MCF 10A (cell line): ENCODE measurements at regions of chr1 and their contacts with region 1.

Region 1: DNA sequence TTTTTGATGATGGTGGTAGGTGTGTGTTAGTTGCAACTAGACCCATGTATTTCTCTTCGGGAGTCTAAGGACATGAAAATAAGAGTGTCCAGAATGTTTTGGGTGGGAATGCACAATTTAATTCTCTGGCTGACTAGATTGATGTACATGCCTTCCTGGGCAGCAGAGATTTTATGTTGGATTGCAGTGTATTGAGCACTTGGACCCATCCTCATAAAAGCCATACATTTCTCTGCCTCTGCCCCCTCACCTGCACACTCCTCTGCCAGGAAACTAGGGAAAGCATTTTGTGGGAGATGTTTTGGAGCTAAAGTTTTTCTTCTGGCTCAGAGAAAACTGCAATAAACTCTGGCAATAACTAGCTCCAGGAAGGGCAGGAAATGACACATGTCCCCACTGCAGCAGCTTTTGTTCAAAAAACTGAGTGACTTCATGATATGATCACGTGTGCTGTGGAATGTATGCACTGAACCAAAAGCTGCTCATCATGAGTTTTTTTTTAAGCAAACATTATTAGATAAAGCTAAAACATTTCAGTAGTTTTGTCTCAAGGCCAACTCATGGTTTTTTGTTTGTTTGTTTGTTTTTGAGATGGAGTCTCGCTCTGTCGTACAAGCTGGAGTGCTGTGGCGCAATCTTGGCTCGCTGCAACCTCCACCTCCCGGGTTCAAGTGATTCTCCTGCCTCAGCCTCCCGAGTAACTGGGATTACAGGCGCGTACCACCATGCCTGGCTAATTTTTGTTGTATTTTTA is 17.6 kb downstream of the RIT1 start:
- DNase-seq: peak; percentile 83
- H3K4me3 Mint-ChIP-seq: peak overlapping the region; percentile 53
- H3K27ac Mint-ChIP-seq: peak overlapping the region; percentile 93
- H3K4me1 Mint-ChIP-seq: peaks cover 16% of the 10 kb centered on the region
- H3K27me3 Mint-ChIP-seq: no peaks in the 10 kb centered on the region
- CTCF ChIP-seq: no peak

Region 2: GRCh38 chr1:155859234-155859829 is 34.2 kb before region 1 on chr1 and contains the start of gene SYT11:
- CTCF ChIA-PET with region 1: no interaction called
- POLR2A ChIA-PET with region 1: interaction called, 18 read pairs
- intact Hi-C with region 1: loop called (anchors 2 kb)
- DNase-seq: peak; percentile 99
- H3K4me3 Mint-ChIP-seq: peak within 1 kb of the TSS; percentile 99
- H3K27ac Mint-ChIP-seq: no peak within 1 kb of the TSS
- H3K4me1 Mint-ChIP-seq: peaks cover 16% of the 10 kb centered on the region
- H3K27me3 Mint-ChIP-seq: peaks cover 20% of the 10 kb centered on the region
- CTCF ChIP-seq: no peak
- total RNA-seq, gene SYT11: 0.14 TPM in 1 of 2 replicates, not detected in the other

Region 3: DNA sequence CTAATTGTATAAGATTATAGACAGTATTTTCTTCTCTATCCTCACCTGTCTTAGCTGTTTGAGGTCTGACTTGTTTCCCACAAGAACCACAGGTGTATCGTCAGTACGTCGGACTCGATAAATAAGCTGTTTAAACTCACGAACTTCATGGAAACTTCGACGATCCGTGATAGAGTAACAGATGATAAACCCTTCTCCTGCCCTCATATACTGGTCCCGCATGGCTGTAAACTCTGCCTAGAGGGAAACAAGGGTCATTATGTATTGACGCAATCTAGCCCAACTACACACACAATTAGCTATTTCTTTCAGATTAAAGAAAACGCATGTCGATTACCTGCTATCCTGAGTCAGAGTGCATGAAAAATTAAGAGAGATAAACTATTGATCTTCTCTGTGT is 10.7 kb after region 1 on chr1:
- CTCF ChIA-PET with region 1: no interaction called
- POLR2A ChIA-PET with region 1: interaction called, 11 read pairs
- intact Hi-C with region 1: no loop called
- DNase-seq: no peak
- H3K4me3 Mint-ChIP-seq: no peak overlapping the region
- H3K27ac Mint-ChIP-seq: no peak overlapping the region
- H3K4me1 Mint-ChIP-seq: no peaks in the 10 kb centered on the region
- H3K27me3 Mint-ChIP-seq: no peaks in the 10 kb centered on the region
- CTCF ChIP-seq: no peak

Region 4: DNA sequence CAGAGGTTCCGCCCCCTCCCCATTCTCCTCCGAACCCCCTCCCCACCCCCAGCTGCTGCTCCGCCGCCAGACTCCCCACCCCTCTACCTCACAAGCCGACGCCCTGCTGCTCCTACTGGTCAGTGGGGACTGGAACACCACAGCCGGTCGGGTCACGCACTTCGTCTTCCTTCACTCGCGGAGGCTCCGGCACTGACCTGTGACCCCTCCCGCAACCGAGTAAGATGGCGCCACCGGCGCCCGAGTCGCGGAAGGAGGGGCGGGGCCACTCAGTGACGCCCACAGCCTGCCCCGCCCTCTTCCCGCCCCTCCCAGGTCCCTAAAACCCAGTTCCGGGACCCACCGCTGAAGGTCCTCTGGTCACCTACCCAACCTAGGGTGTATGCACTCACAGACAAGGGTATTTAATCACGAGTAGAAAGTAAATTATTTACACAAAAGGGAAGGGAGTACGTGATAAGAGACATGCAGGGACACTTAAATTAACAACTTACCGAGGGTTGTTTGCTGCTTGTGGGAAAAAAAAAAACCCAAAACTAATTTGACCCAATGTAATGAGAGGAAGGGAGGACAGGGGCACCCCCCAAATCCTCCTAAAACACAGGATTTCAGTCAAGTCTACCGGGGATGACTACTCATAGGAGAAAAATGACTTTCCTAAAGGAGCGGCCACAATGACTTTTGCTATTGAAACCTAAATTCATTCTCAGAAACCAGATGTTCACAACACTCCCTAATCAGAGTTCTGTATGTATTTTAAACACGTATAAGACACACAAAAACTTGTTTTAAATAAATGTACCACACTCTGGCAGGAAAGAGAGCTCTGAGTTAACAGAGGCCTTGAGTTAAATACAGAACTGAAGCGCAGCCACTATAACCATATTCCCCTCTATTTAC is 17.8 kb after region 1 on chr1 and contains the start of gene RIT1:
- CTCF ChIA-PET with region 1: interaction called, 3 read pairs
- POLR2A ChIA-PET with region 1: interaction called, 18 read pairs
- intact Hi-C with region 1: no loop called
- DNase-seq: peak; percentile 88
- H3K4me3 Mint-ChIP-seq: peak within 1 kb of the TSS; percentile 87
- H3K27ac Mint-ChIP-seq: peak within 1 kb of the TSS; percentile 96
- H3K4me1 Mint-ChIP-seq: peaks cover 20% of the 10 kb centered on the region
- H3K27me3 Mint-ChIP-seq: no peaks in the 10 kb centered on the region
- CTCF ChIP-seq: no peak
- total RNA-seq, gene RIT1: 36.2 and 43.1 TPM in 2 replicates